ENCODE measurements at regions of chr16 and their contacts with region 1.

Region 1: GRCh38 chr16:73172241-73172972 is 124.5 kb upstream of the ZFHX3 start:
- DNase-seq: peak; percentile 65
- H3K4me3 ChIP-seq: no peak overlapping the region
- H3K27me3 ChIP-seq: peaks cover 3% of the 10 kb centered on the region
- CTCF ChIP-seq: peak; percentile 54

Region 2: GRCh38 chr16:73047518-73048291 is 124.7 kb before region 1 on chr16 and contains the start of gene ZFHX3:
- CTCF ChIA-PET with region 1: no interaction called
- POLR2A ChIA-PET with region 1: interaction called, 21 read pairs
- DNase-seq: no peak
- H3K4me3 ChIP-seq: peak within 1 kb of the TSS; percentile 79
- H3K27me3 ChIP-seq: no peaks in the 10 kb centered on the region
- CTCF ChIP-seq: 0 out of 2 replicates have a peak, but pooled peaks have one; percentile 9
- polyA plus RNA-seq, gene ZFHX3: 2.2 and 2.8 TPM in 2 replicates

Region 3: GRCh38 chr16:73202161-73202729 is 29.8 kb after region 1 on chr16:
- CTCF ChIA-PET with region 1: no interaction called
- POLR2A ChIA-PET with region 1: interaction called, 18 read pairs
- DNase-seq: peak; percentile 98
- H3K4me3 ChIP-seq: no peak overlapping the region
- H3K27me3 ChIP-seq: no peaks in the 10 kb centered on the region
- CTCF ChIP-seq: no peak

Region 4: DNA sequence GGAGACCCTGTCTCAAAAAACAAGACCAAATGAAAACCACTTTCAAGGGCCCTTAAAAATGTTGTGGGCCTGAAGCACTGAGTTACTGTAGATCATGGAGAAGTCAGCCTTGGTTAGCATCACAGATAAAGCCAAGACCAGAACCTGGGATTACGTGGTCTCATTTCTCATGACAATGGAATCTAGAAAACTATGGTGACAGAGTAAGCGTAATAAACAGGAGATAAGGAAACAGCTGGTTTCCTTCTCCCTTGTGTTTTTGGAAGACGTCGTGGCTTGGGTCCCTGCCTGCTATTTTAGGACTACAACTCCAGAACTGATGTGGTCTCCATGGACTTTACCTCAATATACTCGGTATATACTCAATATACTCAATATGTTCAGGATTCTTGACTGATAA is 56.2 kb after region 1 on chr16:
- CTCF ChIA-PET with region 1: no interaction called
- POLR2A ChIA-PET with region 1: no interaction called
- DNase-seq: no peak
- H3K4me3 ChIP-seq: no peak overlapping the region
- H3K27me3 ChIP-seq: no peaks in the 10 kb centered on the region; the same call in 1 of the 2 replicates
- CTCF ChIP-seq: no peak